ENCODE measurements at regions of chr7 and their contacts with region 1.

Region 1: DNA sequence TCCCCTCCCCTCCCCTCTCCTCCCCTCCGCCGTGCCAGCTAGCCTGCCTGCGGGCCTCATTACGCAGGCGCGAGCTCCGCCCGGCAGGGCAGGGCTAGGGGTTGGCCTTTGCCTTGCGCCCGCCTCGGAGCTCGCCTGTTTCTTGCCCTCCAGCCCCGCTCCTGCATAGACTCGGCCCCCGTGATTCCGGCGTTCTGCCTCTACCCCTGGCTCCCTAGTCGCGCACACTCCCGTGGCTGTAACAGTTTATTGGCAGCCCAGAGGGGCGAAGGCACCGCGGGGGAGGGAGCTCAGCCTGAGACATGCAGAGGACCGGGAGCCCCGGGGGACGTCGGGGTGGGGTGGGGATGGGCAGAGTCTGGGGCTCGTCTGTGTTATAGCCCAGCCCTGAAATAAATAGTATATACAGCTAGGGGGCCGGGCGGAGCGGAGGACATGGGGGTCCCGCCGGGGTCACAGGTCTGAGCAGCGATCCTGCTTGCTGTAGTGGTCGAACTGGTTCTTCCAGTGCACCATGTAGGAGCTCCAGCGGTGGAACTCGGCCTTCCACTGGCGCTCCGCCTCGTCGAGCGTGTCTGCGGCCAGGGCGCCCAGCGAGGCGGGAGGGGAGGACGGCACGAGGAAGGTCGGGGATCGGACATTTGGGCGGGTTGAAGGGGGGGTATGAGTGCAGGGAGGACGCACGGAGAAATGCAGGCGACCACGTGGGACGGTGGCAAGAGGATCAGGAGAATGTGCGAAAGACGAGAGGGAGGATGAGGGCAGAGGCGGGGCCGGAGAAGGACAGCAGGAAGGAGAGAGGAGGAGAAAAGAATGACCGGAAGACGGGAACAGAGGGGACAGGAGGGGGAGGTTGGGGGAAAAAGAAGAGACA is 483 bp upstream of the UFSP1 start:
- DNase-seq: peak; percentile 85 to 91 (median 85)
- H3K4me3 ChIP-seq: peak overlapping the region; percentile 43 to 81 (median 54)
- H3K4me3 Mint-ChIP-seq: peak overlapping the region; percentile 83 to 96
- H3K27ac ChIP-seq: peak overlapping the region in 1 of 2 donors; percentile 45
- H3K27ac Mint-ChIP-seq: peak overlapping the region in 6 of 7 donors; percentile 15 to 83 (median 50)
- H3K4me1 ChIP-seq: peaks cover 53 to 62% of the 10 kb centered on the region in 2 donors
- H3K4me1 Mint-ChIP-seq: peaks cover 52% of the 10 kb centered on the region
- H3K27me3 ChIP-seq: peaks cover 16 to 47% of the 10 kb centered on the region in 2 donors
- H3K27me3 Mint-ChIP-seq: peaks cover 37 to 51% (median 51%) of the 10 kb centered on the region in 3 donors
- CTCF ChIP-seq: no peak

Region 2: GRCh38 chr7:100874577-100875355 is 15.2 kb before region 1 on chr7 and contains the start of gene SRRT:
- intact Hi-C with region 1: loop called in 1 of 2 experiments (anchors 1 kb)
- DNase-seq: peak; percentile 97 to 98 (median 97)
- H3K4me3 ChIP-seq: peak within 1 kb of the TSS; percentile 68 to 98 (median 76)
- H3K4me3 Mint-ChIP-seq: peak within 1 kb of the TSS; percentile 97
- H3K27ac ChIP-seq: peak within 1 kb of the TSS; percentile 79 to 94
- H3K27ac Mint-ChIP-seq: peak within 1 kb of the TSS; percentile 92 to 98 (median 95)
- H3K4me1 ChIP-seq: peaks cover 22 to 31% of the 10 kb centered on the region in 2 donors
- H3K4me1 Mint-ChIP-seq: peaks cover 30% of the 10 kb centered on the region
- H3K27me3 ChIP-seq: no peaks in the 10 kb centered on the region
- H3K27me3 Mint-ChIP-seq: peaks cover 0 to 8% (median 0%) of the 10 kb centered on the region in 3 donors
- CTCF ChIP-seq: peak; percentile 25
- polyA plus RNA-seq, gene SRRT: 26.9 to 116 (median 29.6) TPM

Measured in CD14-positive monocyte (primary cell).